GM12878 (cell line): ENCODE measurements at regions of chr11 and their contacts with region 1.

Region 1: GRCh38 chr11:8688414-8689362 is 6.1 kb downstream of the RPL27A start:
- DNase-seq: peak; percentile 92
- ATAC-seq: peak; percentile 91
- H3K4me3 ChIP-seq: peak overlapping the region; percentile 88
- H3K27ac ChIP-seq: peak overlapping the region; percentile 88
- H3K4me1 ChIP-seq: peaks cover 31% of the 10 kb centered on the region
- H3K27me3 ChIP-seq: no peaks in the 10 kb centered on the region
- CTCF ChIP-seq: peak in 1 of 3 experiments; percentile 16; a peak in 1 of 6 replicates
- EP300 ChIP-seq: peak in 1 of 2 experiments; percentile 40; a peak in 1 of 4 replicates
- POLR2A ChIP-seq: peak; percentile 92
- RAD21 ChIP-seq: peak; percentile 7; the same call in 1 of the 2 replicates

Region 2: DNA sequence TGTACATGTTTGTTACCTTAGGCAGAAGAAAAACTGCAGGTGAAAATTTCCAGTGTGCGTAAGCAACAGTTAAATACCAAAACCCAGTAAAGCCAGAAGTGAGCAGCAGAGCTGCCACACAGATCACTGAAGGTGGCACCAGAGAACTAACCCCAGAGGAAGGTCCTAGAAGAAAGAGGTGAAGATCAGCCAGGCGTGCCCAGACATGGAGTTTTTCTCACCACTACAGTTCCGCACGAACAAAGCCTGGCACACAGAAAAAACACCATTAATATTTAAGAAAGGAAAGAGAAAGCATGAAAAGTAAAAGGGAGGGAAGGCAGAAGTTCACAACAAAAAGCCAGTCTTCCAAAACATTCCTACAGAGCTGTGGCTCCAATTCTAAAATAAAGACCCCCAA is 155.4 kb before region 1 on chr11:
- CTCF ChIA-PET with region 1: no interaction called
- POLR2A ChIA-PET with region 1: interaction called, 5 read pairs
- RAD21 ChIA-PET with region 1: interaction called, 3 read pairs
- SMC1A ChIA-PET with region 1: no interaction called
- in situ Hi-C with region 1: no loop called
- intact Hi-C with region 1: loop called (anchors 10 kb)
- DNase-seq: peak; percentile 86
- ATAC-seq: peak; percentile 94
- H3K4me3 ChIP-seq: peak overlapping the region; percentile 2; the same call in 1 of the 2 replicates
- H3K27ac ChIP-seq: peak overlapping the region; percentile 89
- H3K4me1 ChIP-seq: peaks cover 20% of the 10 kb centered on the region
- H3K27me3 ChIP-seq: no peaks in the 10 kb centered on the region
- CTCF ChIP-seq: peak; percentile 33 to 49 (median 47); a peak in 5 of 6 replicates
- EP300 ChIP-seq: no peak
- POLR2A ChIP-seq: no peak
- RAD21 ChIP-seq: peak; percentile 54

Region 3: DNA sequence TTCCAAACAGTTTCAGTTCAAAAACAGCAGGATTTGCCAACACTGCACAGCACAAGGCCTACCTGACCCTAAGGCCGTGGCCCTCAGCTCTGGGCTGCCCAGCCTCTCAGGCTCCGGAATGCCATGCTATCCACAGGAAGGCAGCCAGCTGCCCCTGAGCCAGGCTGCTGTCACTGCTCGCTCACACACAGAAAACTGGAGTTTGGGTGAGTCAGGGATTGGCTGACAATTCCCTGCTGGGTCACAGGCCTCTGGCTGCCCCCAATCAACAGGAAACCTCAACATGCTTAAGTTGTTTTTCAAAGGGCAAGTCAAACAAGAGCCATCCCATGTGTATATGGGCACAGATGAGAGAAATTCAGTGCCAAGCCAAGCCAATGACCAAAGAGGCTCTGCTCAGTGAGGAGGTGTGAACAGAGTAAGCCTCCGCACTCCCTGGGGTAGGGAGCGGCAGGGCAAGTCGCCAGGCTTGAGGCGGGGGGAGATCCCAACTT is 44.1 kb after region 1 on chr11:
- CTCF ChIA-PET with region 1: interaction called, 6 read pairs
- POLR2A ChIA-PET with region 1: interaction called, 6 read pairs
- RAD21 ChIA-PET with region 1: interaction called, 11 read pairs
- SMC1A ChIA-PET with region 1: interaction called, 6 read pairs
- in situ Hi-C with region 1: no loop called
- intact Hi-C with region 1: no loop called
- DNase-seq: no peak
- ATAC-seq: no peak; the same call in 2 of the 3 replicates
- H3K4me3 ChIP-seq: no peak overlapping the region
- H3K27ac ChIP-seq: peak overlapping the region; percentile 13; the same call in 1 of the 2 replicates
- H3K4me1 ChIP-seq: peaks cover 15% of the 10 kb centered on the region
- H3K27me3 ChIP-seq: no peaks in the 10 kb centered on the region; a peak in 1 of 4 replicates
- CTCF ChIP-seq: no peak
- EP300 ChIP-seq: no peak
- POLR2A ChIP-seq: no peak
- RAD21 ChIP-seq: no peak

Region 4: DNA sequence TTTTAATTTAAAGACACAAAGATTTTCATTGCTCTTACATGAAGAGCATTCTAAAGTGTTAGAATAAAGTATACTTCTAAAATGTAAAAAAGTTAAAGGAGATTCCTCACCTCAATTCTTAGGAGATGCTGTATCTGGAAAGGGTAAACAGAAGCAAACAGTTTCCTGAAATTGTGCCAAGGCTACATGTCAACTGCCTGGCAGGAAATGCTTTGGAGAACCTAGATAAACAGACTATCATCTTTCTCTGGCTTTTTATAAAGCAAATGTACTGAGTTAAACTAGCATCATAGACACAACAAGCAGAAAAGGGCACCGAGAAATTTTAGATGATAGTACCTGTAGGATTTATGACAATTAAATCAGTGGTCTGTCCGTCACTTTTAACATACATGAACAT is 197.6 kb after region 1 on chr11:
- CTCF ChIA-PET with region 1: no interaction called
- POLR2A ChIA-PET with region 1: no interaction called
- RAD21 ChIA-PET with region 1: no interaction called
- SMC1A ChIA-PET with region 1: no interaction called
- in situ Hi-C with region 1: no loop called
- intact Hi-C with region 1: no loop called
- DNase-seq: no peak
- ATAC-seq: no peak
- H3K4me3 ChIP-seq: no peak overlapping the region
- H3K27ac ChIP-seq: no peak overlapping the region
- H3K4me1 ChIP-seq: no peaks in the 10 kb centered on the region
- H3K27me3 ChIP-seq: peaks cover 0 to 4% of the 10 kb centered on the region in 2 experiments; a peak in 1 of 4 replicates
- CTCF ChIP-seq: no peak
- EP300 ChIP-seq: no peak
- POLR2A ChIP-seq: no peak
- RAD21 ChIP-seq: no peak

Region 5: DNA sequence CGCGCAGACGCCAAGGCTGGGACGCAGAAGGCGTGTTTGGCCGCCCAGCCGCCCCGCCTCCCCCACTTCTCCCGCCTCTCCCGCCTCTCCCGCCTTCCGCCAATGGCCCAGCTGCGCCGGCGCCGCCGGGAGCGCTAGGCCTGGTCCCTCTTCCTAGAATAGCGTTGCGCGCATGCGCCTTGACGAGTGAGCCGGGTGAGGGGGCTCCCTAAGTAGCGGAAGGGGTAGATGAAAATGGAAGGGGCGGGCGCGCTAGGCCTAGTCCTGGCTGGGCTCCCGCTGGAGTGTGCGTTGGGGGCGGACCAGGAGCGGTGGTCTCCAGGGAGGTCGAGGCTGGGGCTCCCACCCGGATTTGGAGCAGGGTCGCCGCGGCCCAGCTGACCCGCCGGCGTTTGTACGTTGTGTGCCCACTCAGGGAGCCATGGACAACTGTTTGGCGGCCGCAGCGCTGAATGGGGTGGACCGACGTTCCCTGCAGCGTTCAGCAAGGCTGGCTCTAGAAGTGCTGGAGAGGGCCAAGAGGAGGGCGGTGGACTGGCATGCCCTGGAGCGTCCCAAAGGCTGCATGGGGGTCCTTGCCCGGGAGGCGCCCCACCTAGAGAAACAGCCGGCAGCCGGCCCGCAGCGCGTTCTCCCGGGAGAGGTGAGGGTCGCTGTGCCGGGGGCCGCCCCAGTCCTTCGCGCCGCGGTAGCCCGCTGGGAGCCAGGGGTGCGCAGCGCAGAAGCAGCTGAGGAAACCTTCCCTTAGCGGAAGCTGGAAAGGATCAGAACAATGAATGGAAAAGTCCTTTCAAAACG is 222.5 kb after region 1 on chr11 and contains the start of gene AKIP1:
- CTCF ChIA-PET with region 1: interaction called, 3 read pairs
- POLR2A ChIA-PET with region 1: no interaction called
- RAD21 ChIA-PET with region 1: no interaction called
- SMC1A ChIA-PET with region 1: no interaction called
- in situ Hi-C with region 1: no loop called
- intact Hi-C with region 1: loop called (anchors 5 kb)
- DNase-seq: peak; percentile 65
- ATAC-seq: peak; percentile 88
- H3K4me3 ChIP-seq: peak within 1 kb of the TSS; percentile 95
- H3K27ac ChIP-seq: peak within 1 kb of the TSS; percentile 65
- H3K4me1 ChIP-seq: peaks cover 11% of the 10 kb centered on the region
- H3K27me3 ChIP-seq: no peaks in the 10 kb centered on the region; a peak in 1 of 4 replicates
- CTCF ChIP-seq: no peak
- EP300 ChIP-seq: no peak
- POLR2A ChIP-seq: peak; percentile 61; the same call in 1 of the 2 replicates
- RAD21 ChIP-seq: no peak
- polyA plus RNA-seq, gene AKIP1: 5.1 to 14.7 TPM

Region 6: GRCh38 chr11:9066433-9066925 is 377.8 kb after region 1 on chr11:
- CTCF ChIA-PET with region 1: no interaction called
- POLR2A ChIA-PET with region 1: no interaction called
- RAD21 ChIA-PET with region 1: no interaction called
- SMC1A ChIA-PET with region 1: no interaction called
- in situ Hi-C with region 1: no loop called
- intact Hi-C with region 1: loop called (anchors 5 kb)
- DNase-seq: no peak
- ATAC-seq: no peak
- H3K4me3 ChIP-seq: no peak overlapping the region
- H3K27ac ChIP-seq: no peak overlapping the region
- H3K4me1 ChIP-seq: peaks cover 6% of the 10 kb centered on the region
- H3K27me3 ChIP-seq: no peaks in the 10 kb centered on the region
- CTCF ChIP-seq: no peak
- EP300 ChIP-seq: no peak
- POLR2A ChIP-seq: no peak
- RAD21 ChIP-seq: no peak